HepG2 (cell line): ENCODE measurements at regions of chr1 and their contacts with region 1.

Region 1: DNA sequence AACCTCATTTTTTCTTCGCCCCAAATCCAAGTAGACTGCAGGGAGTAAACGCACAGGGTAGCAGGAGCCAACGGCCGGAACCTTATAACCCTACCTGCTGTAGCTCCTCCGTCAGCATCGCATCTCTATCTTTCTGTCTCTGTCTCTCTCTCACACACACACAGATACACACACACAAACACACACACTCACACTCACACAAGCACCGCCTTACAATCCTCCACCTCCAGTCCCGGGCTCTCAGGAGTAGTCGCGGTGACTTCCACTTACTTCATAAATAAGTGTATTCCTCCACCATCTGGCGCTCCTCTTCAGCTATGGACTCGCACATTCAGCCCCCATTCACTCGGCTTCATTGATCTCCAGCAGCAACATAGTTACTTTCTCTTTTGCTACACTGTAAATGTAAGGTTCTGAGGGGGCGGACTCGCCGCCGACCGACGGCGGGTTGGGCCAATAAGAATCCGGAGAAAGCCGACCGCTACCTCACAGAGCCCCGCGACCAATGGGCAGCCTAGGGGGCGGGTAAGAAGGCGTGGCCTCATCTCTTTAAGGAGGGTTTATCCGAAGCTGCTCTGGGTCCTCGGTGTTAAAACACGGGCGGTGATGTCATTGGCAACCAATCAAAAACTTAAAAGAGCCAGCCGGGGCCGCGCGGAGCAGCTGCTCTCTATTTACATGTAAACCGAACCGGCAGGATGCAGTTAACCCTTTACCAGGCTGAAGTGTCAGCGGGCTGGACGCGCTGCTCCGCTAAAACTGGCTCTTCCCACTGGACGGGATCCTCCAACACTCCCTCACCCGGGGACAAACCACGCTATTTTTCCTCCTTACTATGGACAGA is at the start of gene DUSP10:
- DNase-seq: peak; percentile 99
- ATAC-seq: peak; percentile 87
- H3K4me3 ChIP-seq: peak within 1 kb of the TSS; percentile 83 to 87 (median 83)
- H3K27ac ChIP-seq: peak within 1 kb of the TSS; percentile 84
- H3K4me1 ChIP-seq: peaks cover 23% of the 10 kb centered on the region
- H3K27me3 ChIP-seq: no peaks in the 10 kb centered on the region; a peak in 2 of 5 replicates
- CTCF ChIP-seq: peak; percentile 29
- EP300 ChIP-seq: no peak
- POLR2A ChIP-seq: peak; percentile 67
- RAD21 ChIP-seq: no peak
- total RNA-seq, gene DUSP10: 2.1 and 2.5 TPM in 2 replicates

Region 2: GRCh38 chr1:221478050-221478949 is 263.6 kb before region 1 on chr1:
- CTCF ChIA-PET with region 1: no interaction called
- POLR2A ChIA-PET with region 1: no interaction called
- in situ Hi-C with region 1: no loop called
- intact Hi-C with region 1: loop called (anchors 1 kb)
- DNase-seq: peak; percentile 12
- ATAC-seq: peak; percentile 92
- H3K4me3 ChIP-seq: no peak overlapping the region
- H3K27ac ChIP-seq: no peak overlapping the region
- H3K4me1 ChIP-seq: no peaks in the 10 kb centered on the region
- H3K27me3 ChIP-seq: no peaks in the 10 kb centered on the region
- CTCF ChIP-seq: peak; percentile 80
- EP300 ChIP-seq: no peak
- POLR2A ChIP-seq: no peak
- RAD21 ChIP-seq: peak; percentile 57

Region 3: GRCh38 chr1:221631556-221631955 is 110.4 kb before region 1 on chr1:
- CTCF ChIA-PET with region 1: no interaction called
- POLR2A ChIA-PET with region 1: no interaction called
- in situ Hi-C with region 1: no loop called
- intact Hi-C with region 1: no loop called
- DNase-seq: no peak
- ATAC-seq: no peak
- H3K4me3 ChIP-seq: no peak overlapping the region
- H3K27ac ChIP-seq: no peak overlapping the region
- H3K4me1 ChIP-seq: no peaks in the 10 kb centered on the region
- H3K27me3 ChIP-seq: no peaks in the 10 kb centered on the region
- CTCF ChIP-seq: no peak
- EP300 ChIP-seq: no peak
- POLR2A ChIP-seq: no peak
- RAD21 ChIP-seq: no peak

Region 4: DNA sequence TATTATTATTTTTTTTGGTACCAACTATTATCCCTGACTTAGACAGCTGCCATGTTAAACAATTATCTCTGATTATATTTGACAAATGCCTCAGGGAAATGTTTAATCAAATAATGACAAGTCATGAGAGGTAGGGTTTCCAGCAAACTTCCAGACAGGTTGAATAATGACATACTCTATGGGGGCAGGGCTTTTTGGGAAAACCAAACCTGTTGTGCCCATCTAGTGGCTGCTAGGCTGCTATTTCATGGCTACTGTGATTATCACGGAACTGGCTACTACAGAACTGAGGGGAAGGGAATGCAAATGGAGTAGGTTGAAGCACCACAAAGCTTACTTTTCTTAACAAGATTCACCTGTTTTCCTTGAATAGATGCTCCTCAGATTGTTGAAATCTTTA is 77.7 kb before region 1 on chr1:
- CTCF ChIA-PET with region 1: no interaction called
- POLR2A ChIA-PET with region 1: no interaction called
- in situ Hi-C with region 1: no loop called
- intact Hi-C with region 1: loop called (anchors 5 kb)
- DNase-seq: no peak
- ATAC-seq: no peak
- H3K4me3 ChIP-seq: no peak overlapping the region
- H3K27ac ChIP-seq: no peak overlapping the region
- H3K4me1 ChIP-seq: no peaks in the 10 kb centered on the region
- H3K27me3 ChIP-seq: no peaks in the 10 kb centered on the region
- CTCF ChIP-seq: no peak
- EP300 ChIP-seq: no peak
- POLR2A ChIP-seq: no peak
- RAD21 ChIP-seq: no peak

Region 5: DNA sequence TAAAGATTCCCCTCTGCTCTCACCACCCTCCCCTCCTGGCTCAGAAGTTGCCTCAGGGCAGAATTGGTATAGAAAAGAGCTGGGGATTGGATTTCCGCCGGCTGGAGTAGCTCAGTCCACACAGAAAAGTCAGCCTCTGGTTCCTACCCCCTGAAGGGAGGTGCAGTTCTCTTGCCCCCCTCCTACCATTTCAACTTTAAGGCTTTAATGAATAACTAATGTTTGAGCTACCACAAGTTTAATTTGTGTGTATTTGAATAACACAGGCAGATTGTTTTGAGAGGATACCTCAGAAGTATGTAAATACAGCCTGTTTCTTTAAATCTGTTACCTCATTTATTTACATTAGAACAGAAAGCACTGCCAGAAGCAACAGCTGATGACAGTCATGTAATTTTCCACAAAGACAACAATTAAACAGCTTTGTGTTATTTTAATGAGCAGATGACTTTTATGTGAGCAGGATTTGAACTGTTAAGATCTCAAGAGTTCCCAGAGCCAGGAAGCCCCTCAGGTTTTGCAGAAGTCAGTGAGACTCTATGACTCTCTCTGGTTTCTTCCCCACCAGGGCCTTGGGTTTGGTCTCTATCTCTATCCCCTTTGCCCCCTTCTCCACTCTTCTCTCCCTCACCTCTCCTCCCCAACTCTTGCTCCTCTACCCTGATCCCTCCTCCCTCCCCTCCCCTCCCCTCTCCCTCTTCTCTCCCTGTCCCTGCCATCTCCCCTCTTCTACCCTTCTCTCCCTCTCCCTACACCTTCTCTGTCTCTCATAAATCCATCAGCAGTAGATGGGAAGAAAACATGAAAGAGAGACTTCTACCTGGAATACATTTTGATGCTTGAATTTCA is 26.4 kb before region 1 on chr1:
- CTCF ChIA-PET with region 1: no interaction called
- POLR2A ChIA-PET with region 1: interaction called, 92 read pairs
- in situ Hi-C with region 1: no loop called
- intact Hi-C with region 1: loop called (anchors 1 kb)
- DNase-seq: peak; percentile 79
- ATAC-seq: peak; percentile 76
- H3K4me3 ChIP-seq: peak overlapping the region in 2 of 3 experiments; percentile 31 to 34; a peak in 2 of 6 replicates
- H3K27ac ChIP-seq: peak overlapping the region; percentile 85
- H3K4me1 ChIP-seq: peaks cover 90% of the 10 kb centered on the region
- H3K27me3 ChIP-seq: no peaks in the 10 kb centered on the region
- CTCF ChIP-seq: no peak
- EP300 ChIP-seq: peak in 1 of 2 experiments; percentile 69; a peak in 1 of 4 replicates
- POLR2A ChIP-seq: no peak
- RAD21 ChIP-seq: no peak

Region 6: GRCh38 chr1:221878134-221878533 is 136.2 kb after region 1 on chr1:
- CTCF ChIA-PET with region 1: no interaction called
- POLR2A ChIA-PET with region 1: no interaction called
- in situ Hi-C with region 1: no loop called
- intact Hi-C with region 1: no loop called
- DNase-seq: no peak
- ATAC-seq: no peak
- H3K4me3 ChIP-seq: no peak overlapping the region
- H3K27ac ChIP-seq: no peak overlapping the region
- H3K4me1 ChIP-seq: no peaks in the 10 kb centered on the region
- H3K27me3 ChIP-seq: no peaks in the 10 kb centered on the region
- CTCF ChIP-seq: no peak
- EP300 ChIP-seq: no peak
- POLR2A ChIP-seq: no peak
- RAD21 ChIP-seq: no peak

Region 7: DNA sequence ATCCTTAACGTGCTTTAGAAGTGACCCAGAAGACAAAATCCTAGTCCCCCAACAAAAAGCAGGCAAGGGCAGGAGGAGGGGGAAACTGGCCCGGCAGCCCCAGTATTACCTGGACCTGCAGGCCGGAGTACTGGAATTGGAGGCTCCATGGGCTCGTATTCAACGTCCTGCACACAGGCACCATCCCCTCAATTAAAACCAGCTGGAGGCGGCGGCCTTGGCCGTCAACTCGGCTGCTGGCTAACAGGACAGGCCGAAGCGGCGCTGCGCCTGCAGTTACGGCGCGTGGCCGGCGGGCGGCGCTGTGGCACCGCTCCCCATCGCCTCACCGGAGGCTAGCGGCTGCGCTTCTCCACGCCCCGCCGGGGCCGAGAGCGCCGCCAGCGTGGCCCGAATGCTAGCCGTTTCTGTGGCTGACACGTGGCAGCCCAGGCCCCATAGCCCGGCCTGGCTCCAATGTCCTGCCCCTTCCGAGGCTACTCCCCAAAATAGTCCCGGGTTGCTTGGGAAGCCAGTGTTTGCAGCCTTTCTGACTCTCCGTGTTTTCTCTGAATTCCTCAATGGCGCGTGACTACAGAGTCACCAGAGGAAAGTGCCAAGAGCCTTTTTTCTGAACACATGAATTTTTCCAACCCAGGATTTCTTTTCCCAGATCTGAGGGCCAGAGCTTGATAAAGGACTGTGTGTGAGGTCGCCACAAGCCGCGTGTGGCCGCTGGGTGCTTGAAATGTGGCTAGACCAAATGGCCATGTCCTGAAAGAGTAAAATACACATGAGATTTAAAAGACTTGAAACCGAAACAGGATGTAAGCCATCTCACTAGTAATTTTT is 723.5 kb after region 1 on chr1:
- CTCF ChIA-PET with region 1: no interaction called
- POLR2A ChIA-PET with region 1: no interaction called
- in situ Hi-C with region 1: loop called (anchors 10 kb)
- intact Hi-C with region 1: loop called (anchors 10 kb)
- DNase-seq: peak; percentile 91
- ATAC-seq: peak; percentile 99
- H3K4me3 ChIP-seq: peak overlapping the region; percentile 60 to 81 (median 74)
- H3K27ac ChIP-seq: peak overlapping the region; percentile 99
- H3K4me1 ChIP-seq: peaks cover 42% of the 10 kb centered on the region
- H3K27me3 ChIP-seq: no peaks in the 10 kb centered on the region
- CTCF ChIP-seq: peak; percentile 98
- EP300 ChIP-seq: no peak
- POLR2A ChIP-seq: peak; percentile 72 to 82
- RAD21 ChIP-seq: peak; percentile 100